Heart left ventricle (tissue), 16 donors: ENCODE measurements at regions of chr3 and their contacts with region 1.

Region 1: GRCh38 chr3:8529181-8529637 is 27.6 kb downstream of the LMCD1 start:
- DNase-seq: peak in 3 of 5 donors; percentile 35 to 56 (median 50)
- ATAC-seq: peak in 3 of 4 donors; percentile 27 to 62 (median 60)
- H3K4me3 ChIP-seq: no peak overlapping the region
- H3K27ac ChIP-seq: peak overlapping the region in 11 of 12 donors; percentile 10 to 58 (median 38)
- H3K4me1 ChIP-seq: peaks cover 0 to 94% (median 54%) of the 10 kb centered on the region in 12 donors
- H3K27me3 ChIP-seq: no peaks in the 10 kb centered on the region
- CTCF ChIP-seq: no peak
- POLR2A ChIP-seq: no peak

Region 2: DNA sequence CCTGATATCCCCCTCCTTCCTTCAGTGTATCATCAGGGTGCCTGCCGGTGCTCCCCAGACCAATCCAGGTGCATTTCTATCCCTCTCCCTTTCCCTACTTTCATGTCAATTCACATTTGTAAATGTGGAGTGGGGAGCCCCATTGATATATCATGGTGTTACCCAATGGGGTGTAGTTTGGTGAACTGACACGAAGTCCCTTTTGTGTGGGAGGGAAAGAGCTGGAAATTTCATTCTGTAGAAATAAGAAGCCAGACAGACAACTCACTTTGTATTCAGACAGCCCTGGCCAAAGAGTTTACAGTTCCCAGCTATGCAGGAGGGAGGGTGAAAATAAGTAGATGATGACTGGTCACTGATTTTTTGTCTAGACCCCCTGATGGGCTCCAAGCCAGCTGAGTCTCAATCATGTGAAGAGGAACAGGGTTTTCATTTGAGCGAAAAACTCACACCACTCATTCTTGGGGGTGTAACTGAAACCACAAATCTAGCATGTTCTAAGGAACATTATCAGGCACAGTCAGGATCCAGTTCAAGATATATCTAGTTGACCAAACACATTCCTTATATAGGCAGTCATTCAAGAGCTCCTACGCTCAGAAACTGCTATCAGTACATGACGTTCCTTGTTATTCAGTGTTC is 31.3 kb after region 1 on chr3:
- intact Hi-C with region 1: loop called in 1 of 10 experiments (anchors 5 kb)
- DNase-seq: peak in 1 of 5 donors; percentile 70
- ATAC-seq: peak; percentile 44 to 77 (median 63)
- H3K4me3 ChIP-seq: no peak overlapping the region
- H3K27ac ChIP-seq: peak overlapping the region; percentile 9 to 87 (median 70)
- H3K4me1 ChIP-seq: peaks cover 6 to 76% (median 47%) of the 10 kb centered on the region in 12 donors
- H3K27me3 ChIP-seq: no peaks in the 10 kb centered on the region
- CTCF ChIP-seq: no peak
- POLR2A ChIP-seq: no peak

Region 3: DNA sequence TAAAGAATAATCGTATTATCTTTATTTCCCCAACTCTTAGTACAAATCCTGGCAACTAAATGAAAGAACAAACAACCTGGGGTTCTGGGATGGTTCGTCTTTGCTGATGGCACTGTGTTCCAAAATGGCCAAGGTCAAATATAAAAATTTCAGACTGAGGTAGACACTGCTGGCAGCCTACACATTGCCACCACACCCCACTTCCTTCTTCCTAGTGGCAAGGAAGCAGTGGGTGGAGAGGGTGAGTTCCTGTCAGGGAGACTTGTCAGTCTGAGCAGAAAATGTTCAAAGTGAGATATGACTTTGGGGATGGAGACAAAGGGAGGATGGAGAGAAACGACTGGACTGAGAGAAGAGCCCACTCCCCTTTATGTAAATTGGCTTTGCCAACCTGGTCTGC is 42.0 kb after region 1 on chr3:
- intact Hi-C with region 1: loop called in 1 of 10 experiments (anchors 1 kb)
- DNase-seq: no peak
- ATAC-seq: peak in 3 of 4 donors; percentile 38 to 49 (median 48)
- H3K4me3 ChIP-seq: no peak overlapping the region
- H3K27ac ChIP-seq: peak overlapping the region in 6 of 12 donors; percentile 32 to 55 (median 36)
- H3K4me1 ChIP-seq: peaks cover 3 to 43% (median 25%) of the 10 kb centered on the region in 12 donors
- H3K27me3 ChIP-seq: no peaks in the 10 kb centered on the region
- CTCF ChIP-seq: no peak
- POLR2A ChIP-seq: no peak